Naive thymus-derived CD4-positive, alpha-beta T cell (primary cell): ENCODE measurements at regions of chr16 and their contacts with region 1.

Region 1: DNA sequence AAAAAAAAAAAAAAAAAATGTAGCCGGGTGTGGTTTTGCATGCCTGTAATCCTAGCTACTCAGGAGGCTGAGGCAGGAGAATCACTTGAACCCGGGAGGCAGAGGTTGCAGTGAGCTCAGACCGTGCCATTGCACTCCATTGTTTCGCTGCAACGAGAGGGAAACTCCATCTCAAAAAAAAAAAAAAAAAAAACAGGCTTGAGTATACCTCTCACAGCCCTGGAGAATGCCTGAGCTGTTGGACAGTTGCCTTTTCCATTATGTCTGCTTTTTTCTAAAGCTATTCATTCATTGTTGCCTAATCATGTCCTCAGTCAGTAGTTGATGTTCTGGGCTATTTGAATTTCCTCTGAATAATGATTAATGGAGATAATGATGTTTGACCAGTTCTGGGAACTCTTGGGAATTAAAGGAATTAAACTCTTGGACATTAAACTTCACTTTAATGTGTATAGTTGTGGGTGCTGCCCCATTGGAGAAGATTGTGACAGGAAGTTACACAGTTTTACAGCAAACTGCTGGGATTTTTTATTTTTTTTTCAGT is 11.8 kb downstream of the HMOX2 start:
- DNase-seq: peak in 5 of 9 donors; percentile 26 to 59 (median 40)
- ATAC-seq: peak; percentile 58
- H3K4me3 ChIP-seq: peak overlapping the region; percentile 32
- H3K4me3 Mint-ChIP-seq: peak overlapping the region; percentile 62 to 87 (median 81)
- H3K27ac ChIP-seq: peak overlapping the region; percentile 69
- H3K27ac Mint-ChIP-seq: peak overlapping the region; percentile 92 to 98 (median 96)
- H3K4me1 ChIP-seq: peaks cover 55 to 68% of the 10 kb centered on the region in 2 donors
- H3K4me1 Mint-ChIP-seq: peaks cover 43 to 72% (median 57%) of the 10 kb centered on the region in 7 donors
- H3K27me3 ChIP-seq: no peaks in the 10 kb centered on the region
- H3K27me3 Mint-ChIP-seq: no peaks in the 10 kb centered on the region

Region 2: DNA sequence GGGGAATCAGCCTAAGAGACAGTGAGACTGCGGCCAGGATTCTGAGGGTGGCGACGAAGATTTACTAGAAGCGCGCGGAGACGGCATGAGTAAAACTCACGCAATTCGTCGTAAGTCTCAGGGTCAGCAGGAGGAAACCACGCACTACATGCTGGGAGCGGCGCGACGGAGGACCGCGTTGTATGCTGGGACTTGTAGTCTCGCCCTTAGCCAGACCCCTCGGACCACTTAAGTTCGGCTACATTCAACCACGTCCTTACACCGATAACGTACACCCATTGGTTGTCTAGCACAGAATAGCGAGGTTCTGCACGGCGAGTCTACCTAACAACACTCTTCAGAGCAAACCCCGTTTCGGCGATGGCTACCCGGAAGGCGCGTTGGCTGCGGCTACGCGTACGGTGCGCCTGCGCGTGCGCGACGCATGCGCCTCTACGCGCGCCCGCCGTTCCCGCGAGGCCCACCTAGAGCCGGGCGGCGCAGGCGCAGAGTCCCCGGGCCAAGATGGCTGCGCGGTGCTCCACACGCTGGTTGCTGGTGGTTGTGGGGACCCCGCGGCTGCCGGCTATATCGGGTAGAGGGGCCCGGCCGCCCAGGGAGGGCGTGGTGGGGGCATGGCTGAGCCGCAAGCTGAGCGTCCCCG is 62.5 kb before region 1 on chr16 and contains the start of gene DNAJA3:
- CTCF ChIA-PET with region 1: no interaction called
- POLR2A ChIA-PET with region 1: interaction called, 3 read pairs
- intact Hi-C with region 1: loop called in 1 of 2 experiments (anchors 2 kb)
- DNase-seq: peak; percentile 91 to 97 (median 95)
- ATAC-seq: peak; percentile 93
- H3K4me3 ChIP-seq: peak within 1 kb of the TSS; percentile 97
- H3K4me3 Mint-ChIP-seq: peak within 1 kb of the TSS; percentile 92 to 99 (median 98)
- H3K27ac ChIP-seq: peak within 1 kb of the TSS; percentile 95
- H3K27ac Mint-ChIP-seq: peak within 1 kb of the TSS; percentile 99 to 100 (median 100)
- H3K4me1 ChIP-seq: peaks cover 18% of the 10 kb centered on the region in 2 donors
- H3K4me1 Mint-ChIP-seq: peaks cover 26 to 37% (median 31%) of the 10 kb centered on the region in 7 donors
- H3K27me3 ChIP-seq: no peaks in the 10 kb centered on the region
- H3K27me3 Mint-ChIP-seq: peaks cover 0 to 4% (median 0%) of the 10 kb centered on the region in 5 donors
- total RNA-seq, gene DNAJA3: 33.6 to 79.8 (median 70.5) TPM

Region 3: DNA sequence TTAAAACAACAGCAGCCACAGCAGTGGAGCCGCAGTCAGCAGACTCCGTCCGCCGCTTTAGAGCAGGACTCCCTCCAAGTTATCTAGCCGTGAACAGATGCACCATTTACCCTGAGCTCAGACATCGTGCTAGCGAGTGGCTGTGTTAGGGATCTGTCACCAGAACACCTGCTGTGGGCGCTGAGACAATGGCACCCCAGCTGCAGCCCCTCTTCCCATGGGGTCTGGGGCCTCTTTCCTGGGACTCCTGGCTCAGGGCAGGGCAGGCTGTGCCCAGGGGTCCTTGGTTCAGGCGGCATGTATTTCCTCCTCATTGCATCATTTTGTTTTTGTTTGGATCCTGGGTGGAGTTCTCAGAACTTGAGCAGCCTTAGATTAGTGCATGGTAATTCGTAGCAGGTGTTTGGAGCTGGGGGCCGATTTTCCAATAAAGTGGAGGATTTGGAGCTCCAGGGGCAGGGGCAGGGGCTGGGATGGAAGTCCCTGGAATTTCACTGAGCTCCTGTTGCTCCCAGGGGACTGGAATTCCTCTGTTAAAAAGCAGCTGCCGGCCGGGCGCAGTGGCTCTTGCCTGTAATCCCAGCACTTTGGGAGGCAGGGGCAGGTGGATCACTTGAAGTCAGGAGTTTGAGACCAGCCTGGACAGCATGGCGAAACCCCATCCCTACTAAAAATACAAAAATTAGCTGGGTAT is 37.0 kb before region 1 on chr16:
- CTCF ChIA-PET with region 1: no interaction called
- POLR2A ChIA-PET with region 1: no interaction called
- intact Hi-C with region 1: no loop called
- DNase-seq: no peak
- ATAC-seq: no peak
- H3K4me3 ChIP-seq: no peak overlapping the region
- H3K4me3 Mint-ChIP-seq: no peak overlapping the region
- H3K27ac ChIP-seq: no peak overlapping the region
- H3K27ac Mint-ChIP-seq: peak overlapping the region in 1 of 9 donors; percentile 17
- H3K4me1 ChIP-seq: no peaks in the 10 kb centered on the region
- H3K4me1 Mint-ChIP-seq: peaks cover 0 to 4% (median 0%) of the 10 kb centered on the region in 7 donors
- H3K27me3 ChIP-seq: no peaks in the 10 kb centered on the region
- H3K27me3 Mint-ChIP-seq: no peaks in the 10 kb centered on the region

Region 4: DNA sequence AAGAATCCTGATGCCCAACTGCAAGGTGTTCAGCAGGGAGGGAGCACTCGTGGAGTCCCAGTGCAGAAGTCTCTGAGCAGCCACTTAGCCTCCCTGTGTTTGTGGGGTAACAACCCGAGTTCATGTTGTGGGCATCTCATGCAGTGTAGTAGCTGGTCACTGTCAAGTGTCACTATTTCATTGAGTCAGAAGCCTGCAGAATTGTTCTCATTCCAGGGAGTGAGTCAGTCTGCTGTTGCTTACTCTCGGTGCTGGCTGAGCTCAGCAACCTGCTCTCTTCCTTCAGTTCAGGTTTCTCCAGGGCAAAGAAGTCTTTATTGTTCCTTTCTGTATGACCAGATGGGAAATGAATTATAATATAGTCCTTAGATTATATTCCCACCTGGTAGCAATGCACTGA is 12.2 kb after region 1 on chr16:
- CTCF ChIA-PET with region 1: interaction called, 29 read pairs
- POLR2A ChIA-PET with region 1: interaction called, 169 read pairs
- intact Hi-C with region 1: loop called (anchors 1 kb)
- DNase-seq: no peak
- ATAC-seq: no peak
- H3K4me3 ChIP-seq: no peak overlapping the region
- H3K4me3 Mint-ChIP-seq: peak overlapping the region in 6 of 10 donors; percentile 38 to 83 (median 60)
- H3K27ac ChIP-seq: peak overlapping the region; percentile 61
- H3K27ac Mint-ChIP-seq: peak overlapping the region in 8 of 9 donors; percentile 49 to 100 (median 94)
- H3K4me1 ChIP-seq: peaks cover 31 to 85% of the 10 kb centered on the region in 2 donors
- H3K4me1 Mint-ChIP-seq: peaks cover 55 to 98% (median 88%) of the 10 kb centered on the region in 7 donors
- H3K27me3 ChIP-seq: no peaks in the 10 kb centered on the region
- H3K27me3 Mint-ChIP-seq: no peaks in the 10 kb centered on the region